ENCODE measurements at regions of chr9 and their contacts with region 1.

Region 1: DNA sequence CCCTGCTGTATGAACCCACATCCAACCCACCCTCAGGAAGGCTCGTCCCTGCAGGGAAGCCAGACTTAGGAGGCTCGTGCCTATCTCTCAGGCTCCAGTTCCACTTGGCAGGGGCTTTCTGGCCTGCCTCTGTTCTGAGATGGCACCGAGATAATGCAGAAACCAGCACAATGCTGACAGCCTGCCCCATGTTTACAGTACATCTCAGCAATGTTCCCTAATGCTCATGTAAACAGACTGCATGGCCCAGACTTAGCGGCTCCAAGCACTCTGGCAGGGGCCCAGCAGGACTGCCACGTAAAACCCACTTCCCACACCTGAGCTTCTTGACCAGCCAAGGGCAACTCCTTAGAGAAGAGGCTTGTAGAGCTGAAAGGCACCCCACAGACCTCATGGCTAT is 499.5 kb upstream of the BRINP1 start:
- DNase-seq: no peak
- ATAC-seq: no peak
- H3K4me3 ChIP-seq: no peak overlapping the region
- H3K27ac ChIP-seq: no peak overlapping the region
- H3K4me1 ChIP-seq: no peaks in the 10 kb centered on the region
- H3K27me3 ChIP-seq: no peaks in the 10 kb centered on the region
- CTCF ChIP-seq: no peak

Region 2: DNA sequence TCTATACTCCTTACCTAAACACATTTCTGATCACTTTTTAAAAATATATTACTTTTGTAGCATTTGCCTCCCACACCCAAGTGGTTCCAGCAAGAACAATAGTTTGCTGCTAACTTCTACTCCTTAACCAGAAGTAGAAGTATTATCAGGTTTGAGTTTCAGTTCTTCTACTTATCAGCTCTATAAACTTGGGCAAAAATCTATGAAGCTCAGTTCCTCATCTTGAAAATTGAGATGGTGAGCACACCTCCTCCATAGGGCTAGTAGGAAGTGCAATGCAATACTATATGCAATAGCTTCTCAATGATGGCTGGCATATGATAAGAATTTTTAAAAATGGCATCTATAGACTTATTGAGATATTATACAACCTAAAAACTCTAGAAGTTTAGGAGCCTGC is 1880.7 kb before region 1 on chr9:
- intact Hi-C with region 1: loop called in 1 of 10 experiments (anchors 5 kb)
- DNase-seq: no peak
- ATAC-seq: no peak
- H3K4me3 ChIP-seq: no peak overlapping the region
- H3K27ac ChIP-seq: no peak overlapping the region
- H3K4me1 ChIP-seq: no peaks in the 10 kb centered on the region
- H3K27me3 ChIP-seq: no peaks in the 10 kb centered on the region
- CTCF ChIP-seq: no peak